ENCODE measurements at regions of chr19 and their contacts with region 1.

Region 1: GRCh38 chr19:34733826-34734600 is at the start of gene ZNF181:
- DNase-seq: peak; percentile 93
- H3K4me3 ChIP-seq: peak within 1 kb of the TSS; percentile 62
- H3K4me3 Mint-ChIP-seq: peak within 1 kb of the TSS; percentile 72
- H3K27ac Mint-ChIP-seq: peak within 1 kb of the TSS; percentile 74
- H3K4me1 ChIP-seq: peaks cover 7% of the 10 kb centered on the region
- H3K4me1 Mint-ChIP-seq: peaks cover 10% of the 10 kb centered on the region
- H3K27me3 ChIP-seq: no peaks in the 10 kb centered on the region
- H3K27me3 Mint-ChIP-seq: no peaks in the 10 kb centered on the region
- CTCF ChIP-seq: no peak
- total RNA-seq, gene ZNF181: 5.4 and 6.2 TPM in 2 replicates

Region 2: DNA sequence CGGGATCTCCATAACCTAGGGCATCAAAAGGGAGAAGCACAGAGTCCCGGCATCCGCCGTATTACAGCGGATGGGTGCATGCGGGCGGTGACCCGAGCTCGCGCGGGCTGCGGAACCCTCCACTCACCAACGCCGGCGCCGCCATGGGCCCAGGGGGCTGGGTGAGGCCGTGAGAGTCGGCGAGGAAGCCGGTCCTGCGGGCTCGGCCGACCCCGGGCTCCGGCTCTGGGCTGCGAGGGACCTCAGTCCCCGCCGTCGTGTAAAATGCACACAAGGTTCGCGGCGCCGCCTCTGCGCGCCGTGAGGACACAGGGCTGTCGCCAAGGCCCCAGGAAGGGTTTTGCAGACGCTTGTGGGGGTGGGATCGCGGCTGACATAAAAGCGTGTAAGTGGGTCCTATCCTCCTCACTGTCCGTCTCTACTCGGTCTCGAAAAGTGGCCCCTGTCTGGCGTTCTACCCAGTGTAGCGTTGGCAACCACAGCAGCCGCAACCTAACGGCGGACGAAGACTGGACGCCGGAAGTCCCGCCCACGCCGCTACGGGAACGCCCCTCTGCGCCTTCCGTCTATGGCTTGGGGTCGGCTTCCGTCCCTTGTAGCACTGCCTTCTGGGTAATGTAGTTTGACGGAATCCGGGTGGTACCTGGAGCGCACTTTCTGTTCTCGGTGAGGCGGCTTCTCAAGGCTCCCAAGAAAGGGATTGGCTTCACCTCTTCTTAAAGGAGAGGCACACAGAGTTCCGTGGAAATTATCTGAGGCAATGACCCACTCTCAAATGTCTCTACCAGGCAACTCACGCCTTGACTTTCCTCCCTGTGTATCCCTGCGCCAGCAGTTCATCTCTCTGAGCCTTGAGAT is 38.9 kb after region 1 on chr19 and contains the start of gene ZNF599:
- CTCF ChIA-PET with region 1: no interaction called
- POLR2A ChIA-PET with region 1: no interaction called
- intact Hi-C with region 1: loop called (anchors 1 kb)
- DNase-seq: peak; percentile 89 to 90
- H3K4me3 ChIP-seq: peak within 1 kb of the TSS; percentile 63
- H3K4me3 Mint-ChIP-seq: peak within 1 kb of the TSS; percentile 86
- H3K27ac Mint-ChIP-seq: peak within 1 kb of the TSS; percentile 59
- H3K4me1 ChIP-seq: peaks cover 6% of the 10 kb centered on the region; the same call in 1 of the 2 replicates
- H3K4me1 Mint-ChIP-seq: peaks cover 11% of the 10 kb centered on the region
- H3K27me3 ChIP-seq: peaks cover 1% of the 10 kb centered on the region; the same call in 1 of the 2 replicates
- H3K27me3 Mint-ChIP-seq: no peaks in the 10 kb centered on the region
- CTCF ChIP-seq: no peak
- total RNA-seq, gene ZNF599: 5.0 and 6.8 TPM in 2 replicates

Region 3: GRCh38 chr19:34808566-34808965 is 74.6 kb after region 1 on chr19:
- CTCF ChIA-PET with region 1: no interaction called
- POLR2A ChIA-PET with region 1: no interaction called
- intact Hi-C with region 1: no loop called
- DNase-seq: no peak
- H3K4me3 ChIP-seq: no peak overlapping the region
- H3K4me3 Mint-ChIP-seq: no peak overlapping the region
- H3K27ac Mint-ChIP-seq: no peak overlapping the region
- H3K4me1 ChIP-seq: no peaks in the 10 kb centered on the region
- H3K4me1 Mint-ChIP-seq: no peaks in the 10 kb centered on the region
- H3K27me3 ChIP-seq: no peaks in the 10 kb centered on the region
- H3K27me3 Mint-ChIP-seq: no peaks in the 10 kb centered on the region
- CTCF ChIP-seq: no peak

Region 4: DNA sequence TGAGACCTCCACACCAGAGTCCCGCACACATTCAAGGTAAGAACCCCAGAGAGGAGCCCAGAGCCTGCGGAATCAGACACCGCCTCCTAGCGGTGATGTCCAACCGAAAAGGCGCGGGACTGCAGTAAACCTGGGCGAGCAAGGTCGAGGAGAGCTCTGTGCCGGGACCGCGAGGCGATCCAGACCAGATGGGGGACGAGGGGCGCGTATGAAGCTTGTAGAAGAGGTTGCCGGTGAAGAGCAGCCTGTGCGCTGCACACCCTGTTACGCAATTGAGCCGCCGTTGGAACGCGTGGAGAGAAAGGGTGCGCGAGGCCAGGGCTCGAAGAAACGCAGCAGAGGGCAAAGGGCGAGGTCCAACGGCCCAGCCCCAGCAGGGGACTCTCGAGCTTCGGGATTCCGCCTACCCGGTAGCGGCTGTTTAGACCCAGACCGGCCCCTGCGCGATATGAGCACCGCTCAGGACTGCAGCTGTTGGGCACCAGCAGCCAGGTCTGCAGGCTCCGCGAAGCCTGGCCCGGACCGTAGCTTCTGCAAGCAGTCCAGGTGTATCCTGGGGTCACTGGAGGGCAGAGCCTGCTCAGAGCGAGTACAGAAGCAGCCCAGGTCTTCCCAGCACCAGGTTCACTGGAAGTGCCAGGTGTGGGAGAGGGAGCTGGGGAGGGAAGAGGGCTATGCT is 104.9 kb after region 1 on chr19:
- CTCF ChIA-PET with region 1: no interaction called
- POLR2A ChIA-PET with region 1: no interaction called
- intact Hi-C with region 1: no loop called
- DNase-seq: peak; percentile 60 to 73
- H3K4me3 ChIP-seq: peak overlapping the region; percentile 26
- H3K4me3 Mint-ChIP-seq: peak overlapping the region; percentile 63
- H3K27ac Mint-ChIP-seq: no peak overlapping the region
- H3K4me1 ChIP-seq: peaks cover 11% of the 10 kb centered on the region
- H3K4me1 Mint-ChIP-seq: peaks cover 11% of the 10 kb centered on the region
- H3K27me3 ChIP-seq: no peaks in the 10 kb centered on the region
- H3K27me3 Mint-ChIP-seq: peaks cover 16% of the 10 kb centered on the region
- CTCF ChIP-seq: peak in 1 of 2 experiments; percentile 13

Region 5: GRCh38 chr19:34918190-34918589 is 184.2 kb after region 1 on chr19:
- CTCF ChIA-PET with region 1: no interaction called
- POLR2A ChIA-PET with region 1: no interaction called
- intact Hi-C with region 1: no loop called
- DNase-seq: no peak
- H3K4me3 ChIP-seq: no peak overlapping the region
- H3K4me3 Mint-ChIP-seq: no peak overlapping the region
- H3K27ac Mint-ChIP-seq: no peak overlapping the region
- H3K4me1 ChIP-seq: peaks cover 13% of the 10 kb centered on the region
- H3K4me1 Mint-ChIP-seq: peaks cover 11% of the 10 kb centered on the region
- H3K27me3 ChIP-seq: no peaks in the 10 kb centered on the region
- H3K27me3 Mint-ChIP-seq: no peaks in the 10 kb centered on the region
- CTCF ChIP-seq: no peak